Activated CD4-positive, alpha-beta T cell treated with anti-CD3 and anti-CD28 coated beads for 36 hours (primary cell): ENCODE measurements at regions of chr14 and their contacts with region 1.

Region 1: GRCh38 chr14:103715052-103716000 is at the starts of genes XRCC3 and ZFYVE21:
- DNase-seq: peak; percentile 100
- ATAC-seq: peak; percentile 96
- H3K4me3 Mint-ChIP-seq: peak within 1 kb of the TSS; percentile 81
- H3K27ac Mint-ChIP-seq: peak within 1 kb of the TSS; percentile 60
- H3K4me1 Mint-ChIP-seq: peaks cover 49% of the 10 kb centered on the region
- H3K27me3 Mint-ChIP-seq: no peaks in the 10 kb centered on the region
- total RNA-seq, gene XRCC3: 43.7 to 46.9 TPM
- total RNA-seq, gene ZFYVE21: 10.1 to 12.7 TPM

Region 2: DNA sequence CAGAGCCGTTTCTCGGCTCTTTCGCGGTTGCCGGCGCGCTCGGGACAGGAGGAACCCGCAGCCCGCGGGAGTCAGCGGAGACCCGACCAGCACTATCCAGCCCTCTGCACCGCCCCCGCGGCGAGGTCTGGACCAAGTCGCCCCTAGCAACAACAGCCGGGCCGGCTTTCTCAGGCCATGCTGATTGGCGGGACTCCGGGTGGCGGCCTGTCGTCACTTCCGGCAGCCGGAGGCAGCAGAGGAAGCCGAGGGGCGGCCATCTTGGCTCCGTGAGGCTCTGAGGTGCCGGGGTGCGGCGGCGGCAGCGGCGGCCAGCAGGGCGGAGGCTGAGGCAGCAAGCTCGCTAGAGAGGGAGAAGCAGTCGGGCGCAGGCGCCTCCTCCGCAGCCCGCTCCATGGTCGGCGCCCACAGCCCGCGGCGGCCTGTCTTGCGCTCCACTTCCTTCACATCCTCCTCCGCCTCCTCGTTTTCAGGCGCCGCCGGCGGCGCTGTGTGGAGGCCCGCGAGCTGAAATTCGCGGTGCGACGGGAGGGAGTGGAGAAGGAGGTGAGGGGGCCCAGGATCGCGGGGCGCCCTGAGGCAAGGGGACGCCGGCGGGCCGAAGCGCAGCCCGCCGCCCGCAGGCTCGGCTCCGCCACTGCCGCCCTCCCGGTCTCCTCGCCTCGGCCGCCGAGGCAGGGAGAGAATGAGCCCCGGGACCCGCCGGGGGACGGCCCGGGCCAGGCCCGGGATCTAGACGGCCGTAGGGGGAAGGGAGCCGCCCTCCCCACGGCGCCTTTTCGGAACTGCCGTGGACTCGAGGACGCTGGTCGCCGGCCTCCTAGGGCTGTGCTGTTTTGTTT is 330.0 kb before region 1 on chr14 and contains the start of gene MARK3:
- CTCF ChIA-PET with region 1: no interaction called
- POLR2A ChIA-PET with region 1: no interaction called
- intact Hi-C with region 1: loop called in 1 of 2 experiments (anchors 2 kb)
- DNase-seq: peak; percentile 98
- ATAC-seq: peak; percentile 93
- H3K4me3 Mint-ChIP-seq: peak within 1 kb of the TSS; percentile 99
- H3K27ac Mint-ChIP-seq: peak within 1 kb of the TSS; percentile 98
- H3K4me1 Mint-ChIP-seq: peaks cover 33% of the 10 kb centered on the region
- H3K27me3 Mint-ChIP-seq: no peaks in the 10 kb centered on the region
- total RNA-seq, gene MARK3: 57.3 to 64.9 TPM

Region 3: DNA sequence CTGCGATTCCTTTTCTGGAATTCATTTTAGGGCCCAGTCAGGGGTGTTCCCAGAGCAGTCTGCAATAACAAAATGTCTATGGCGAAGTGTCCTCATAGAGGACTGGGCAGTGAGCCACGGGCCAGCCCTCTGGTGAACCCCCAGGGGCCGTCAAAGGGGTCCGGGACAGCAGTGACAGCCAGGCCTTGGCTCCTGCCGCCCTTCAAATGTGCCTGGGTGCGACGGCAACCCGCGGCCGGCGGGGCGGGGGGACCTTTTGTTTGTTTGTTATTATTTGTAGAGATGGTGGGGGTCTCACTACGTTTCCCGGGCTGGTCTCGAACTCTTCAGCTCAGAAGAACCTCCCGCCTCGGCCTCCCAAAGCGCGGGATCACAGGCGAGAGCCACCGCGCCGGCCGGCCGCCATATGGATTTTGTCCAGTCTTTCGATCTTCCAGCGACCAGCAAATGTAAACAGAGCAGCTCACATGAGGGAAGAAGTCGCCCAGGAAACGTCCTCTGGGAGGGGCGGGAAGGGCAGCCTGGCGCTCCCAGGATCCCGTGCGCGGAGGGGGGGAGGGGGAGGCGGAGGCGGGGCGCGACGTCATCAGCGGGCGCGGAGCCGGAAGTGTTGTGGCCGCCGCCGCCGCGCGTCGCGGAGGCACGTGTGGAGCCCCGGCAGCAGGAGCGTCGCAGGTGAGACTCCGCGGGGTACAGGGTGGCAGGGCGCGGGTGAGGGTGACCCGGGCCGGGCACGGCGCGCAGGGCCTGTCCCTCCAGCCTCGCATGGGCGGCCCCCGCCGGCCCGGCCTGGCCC is 186.5 kb before region 1 on chr14 and contains the start of gene TRMT61A:
- CTCF ChIA-PET with region 1: no interaction called
- POLR2A ChIA-PET with region 1: no interaction called
- intact Hi-C with region 1: loop called in 1 of 2 experiments (anchors 1 kb)
- DNase-seq: peak; percentile 87
- ATAC-seq: peak; percentile 77
- H3K4me3 Mint-ChIP-seq: peak within 1 kb of the TSS; percentile 96
- H3K27ac Mint-ChIP-seq: peak within 1 kb of the TSS; percentile 94
- H3K4me1 Mint-ChIP-seq: peaks cover 33% of the 10 kb centered on the region
- H3K27me3 Mint-ChIP-seq: peaks cover 2% of the 10 kb centered on the region
- total RNA-seq, gene TRMT61A: 8.8 to 9.0 TPM

Region 4: DNA sequence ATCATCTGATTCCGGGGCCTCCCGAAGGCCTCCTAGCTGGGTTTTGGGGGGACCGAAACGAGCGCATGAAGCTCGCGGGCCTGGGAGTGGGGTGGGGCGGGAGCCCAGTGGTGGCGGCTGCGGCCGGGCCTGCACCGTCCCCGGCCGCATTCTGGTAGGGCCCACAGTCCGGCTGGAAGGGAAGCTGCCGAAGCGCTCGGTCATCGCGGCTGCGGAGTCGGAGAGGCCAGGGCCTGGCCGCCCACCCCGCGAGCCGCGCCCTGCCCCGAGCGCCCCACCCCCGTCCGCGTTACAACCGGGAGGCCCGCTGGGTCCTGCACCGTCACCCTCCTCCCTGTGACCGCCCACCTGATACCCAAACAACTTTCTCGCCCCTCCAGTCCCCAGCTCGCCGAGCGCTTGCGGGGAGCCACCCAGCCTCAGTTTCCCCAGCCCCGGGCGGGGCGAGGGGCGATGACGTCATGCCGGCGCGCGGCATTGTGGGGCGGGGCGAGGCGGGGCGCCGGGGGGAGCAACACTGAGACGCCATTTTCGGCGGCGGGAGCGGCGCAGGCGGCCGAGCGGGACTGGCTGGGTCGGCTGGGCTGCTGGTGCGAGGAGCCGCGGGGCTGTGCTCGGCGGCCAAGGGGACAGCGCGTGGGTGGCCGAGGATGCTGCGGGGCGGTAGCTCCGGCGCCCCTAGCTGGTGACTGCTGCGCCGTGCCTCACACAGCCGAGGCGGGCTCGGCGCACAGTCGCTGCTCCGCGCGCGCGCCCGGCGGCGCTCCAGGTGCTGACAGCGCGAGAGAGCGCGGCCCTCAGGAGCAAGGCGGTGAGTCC is 86.4 kb before region 1 on chr14 and contains the start of gene KLC1:
- CTCF ChIA-PET with region 1: interaction called, 3 read pairs
- POLR2A ChIA-PET with region 1: no interaction called
- intact Hi-C with region 1: loop called (anchors 1 to 2 kb)
- DNase-seq: peak; percentile 92
- ATAC-seq: peak; percentile 77
- H3K4me3 Mint-ChIP-seq: peak within 1 kb of the TSS; percentile 87
- H3K27ac Mint-ChIP-seq: peak within 1 kb of the TSS; percentile 81
- H3K4me1 Mint-ChIP-seq: peaks cover 35% of the 10 kb centered on the region
- H3K27me3 Mint-ChIP-seq: no peaks in the 10 kb centered on the region
- total RNA-seq, gene KLC1: 97.4 to 113 TPM

Region 5: GRCh38 chr14:103871596-103872480 is 156.5 kb after region 1 on chr14:
- CTCF ChIA-PET with region 1: no interaction called
- POLR2A ChIA-PET with region 1: no interaction called
- intact Hi-C with region 1: loop called in 1 of 2 experiments (anchors 1 kb)
- DNase-seq: peak; percentile 85
- ATAC-seq: peak; percentile 86
- H3K4me3 Mint-ChIP-seq: peak overlapping the region; percentile 79
- H3K27ac Mint-ChIP-seq: peak overlapping the region; percentile 79
- H3K4me1 Mint-ChIP-seq: peaks cover 12% of the 10 kb centered on the region
- H3K27me3 Mint-ChIP-seq: no peaks in the 10 kb centered on the region